IMR-90 (cell line): ENCODE measurements at regions of chr11 and their contacts with region 1.

Region 1: GRCh38 chr11:76654298-76654851 is 16.2 kb downstream of the LRRC32 start:
- DNase-seq: peak; percentile 97
- ATAC-seq: peak; percentile 90
- H3K4me3 ChIP-seq: no peak overlapping the region
- H3K27ac ChIP-seq: peak overlapping the region; percentile 94
- H3K4me1 ChIP-seq: peaks cover 36% of the 10 kb centered on the region
- H3K27me3 ChIP-seq: peaks cover 2% of the 10 kb centered on the region; the same call in 1 of the 2 replicates
- CTCF ChIP-seq: no peak
- POLR2A ChIP-seq: no peak
- RAD21 ChIP-seq: no peak

Region 2: GRCh38 chr11:76635991-76636738 is 18.2 kb before region 1 on chr11:
- CTCF ChIA-PET with region 1: no interaction called
- POLR2A ChIA-PET with region 1: no interaction called
- dilution Hi-C with region 1: no loop called
- in situ Hi-C with region 1: no loop called
- intact Hi-C with region 1: loop called (anchors 1 kb)
- DNase-seq: no peak
- ATAC-seq: no peak
- H3K4me3 ChIP-seq: no peak overlapping the region
- H3K27ac ChIP-seq: no peak overlapping the region
- H3K4me1 ChIP-seq: peaks cover 3% of the 10 kb centered on the region; the same call in 1 of the 2 replicates
- H3K27me3 ChIP-seq: peaks cover 11% of the 10 kb centered on the region; the same call in 1 of the 2 replicates
- CTCF ChIP-seq: no peak
- POLR2A ChIP-seq: no peak
- RAD21 ChIP-seq: no peak